Naive thymus-derived CD4-positive, alpha-beta T cell (primary cell): ENCODE measurements at regions of chr17 and their contacts with region 1.

Region 1: GRCh38 chr17:49968380-49969133 is 433 bp upstream of the DLX4 start:
- DNase-seq: peak; percentile 46 to 77 (median 71)
- ATAC-seq: peak; percentile 83
- H3K4me3 ChIP-seq: peak overlapping the region; percentile 81
- H3K4me3 Mint-ChIP-seq: peak overlapping the region; percentile 82 to 94 (median 90)
- H3K27ac ChIP-seq: no peak overlapping the region
- H3K27ac Mint-ChIP-seq: peak overlapping the region in 7 of 9 donors; percentile 47 to 91 (median 65)
- H3K4me1 ChIP-seq: peaks cover 9 to 40% of the 10 kb centered on the region in 2 donors
- H3K4me1 Mint-ChIP-seq: peaks cover 25 to 79% (median 57%) of the 10 kb centered on the region in 7 donors
- H3K27me3 ChIP-seq: peaks cover 11 to 41% of the 10 kb centered on the region in 2 donors
- H3K27me3 Mint-ChIP-seq: peaks cover 63 to 93% (median 72%) of the 10 kb centered on the region in 5 donors

Region 2: DNA sequence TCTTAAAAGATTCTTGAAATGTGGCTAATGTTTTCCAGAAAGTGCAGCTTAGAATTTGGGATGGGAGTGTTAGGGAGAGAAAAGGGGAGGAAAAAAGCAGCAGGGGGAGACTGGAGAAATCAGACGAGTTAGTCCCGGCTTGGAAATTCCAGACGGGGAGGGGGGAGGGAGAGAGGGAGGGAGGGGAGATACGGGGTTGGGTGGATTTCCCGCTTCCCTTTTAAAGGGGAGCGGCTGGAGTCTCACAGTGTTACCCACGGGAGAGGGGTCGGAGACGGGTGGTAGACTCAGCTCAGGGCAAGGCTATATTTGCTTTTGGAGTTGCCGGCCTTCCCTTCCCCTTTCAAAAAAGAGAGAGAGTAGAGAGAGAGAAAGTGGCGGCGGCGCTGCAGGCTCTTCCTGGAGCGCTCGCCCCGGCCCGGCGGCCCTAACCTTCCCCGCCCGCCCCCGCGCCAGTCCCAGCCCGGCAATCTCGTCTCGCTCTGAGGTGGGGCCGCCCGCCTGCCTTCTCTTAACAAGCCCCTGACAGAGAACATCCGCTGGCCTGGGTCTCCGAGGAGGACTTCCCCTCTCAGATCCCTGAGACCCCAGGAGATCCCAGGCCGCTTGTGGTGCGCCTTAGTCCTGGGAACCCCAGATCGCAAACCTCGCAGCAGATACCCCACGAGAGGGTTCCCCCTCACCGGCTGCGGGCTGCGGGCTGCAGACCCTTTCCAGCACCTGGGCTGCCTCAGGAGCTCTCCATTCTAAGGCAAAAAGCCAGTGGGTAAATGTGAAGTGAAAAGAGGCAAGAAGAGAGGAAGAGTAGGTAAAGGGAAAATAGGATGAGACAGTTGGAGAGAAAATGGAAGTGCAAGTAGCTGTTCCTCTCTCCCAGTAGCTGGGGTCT is 964.7 kb before region 1 on chr17:
- CTCF ChIA-PET with region 1: no interaction called
- POLR2A ChIA-PET with region 1: no interaction called
- intact Hi-C with region 1: loop called in 1 of 2 experiments (anchors 10 kb)
- DNase-seq: no peak
- ATAC-seq: no peak
- H3K4me3 ChIP-seq: no peak overlapping the region
- H3K4me3 Mint-ChIP-seq: no peak overlapping the region
- H3K27ac ChIP-seq: no peak overlapping the region
- H3K27ac Mint-ChIP-seq: no peak overlapping the region
- H3K4me1 ChIP-seq: no peaks in the 10 kb centered on the region
- H3K4me1 Mint-ChIP-seq: peaks cover under 1 to 13% (median 4%) of the 10 kb centered on the region in 7 donors
- H3K27me3 ChIP-seq: peaks cover 36 to 55% of the 10 kb centered on the region in 2 donors
- H3K27me3 Mint-ChIP-seq: peaks cover 90 to 97% (median 96%) of the 10 kb centered on the region in 5 donors

Region 3: GRCh38 chr17:49496183-49496866 is 472.2 kb before region 1 on chr17:
- CTCF ChIA-PET with region 1: no interaction called
- POLR2A ChIA-PET with region 1: no interaction called
- intact Hi-C with region 1: loop called (anchors 5 kb)
- DNase-seq: peak; percentile 66 to 93 (median 83)
- ATAC-seq: peak; percentile 89
- H3K4me3 ChIP-seq: peak overlapping the region; percentile 67
- H3K4me3 Mint-ChIP-seq: peak overlapping the region; percentile 60 to 90 (median 80)
- H3K27ac ChIP-seq: no peak overlapping the region
- H3K27ac Mint-ChIP-seq: peak overlapping the region in 1 of 9 donors; percentile 31
- H3K4me1 ChIP-seq: peaks cover 27 to 29% of the 10 kb centered on the region in 2 donors
- H3K4me1 Mint-ChIP-seq: peaks cover 0 to 23% (median 22%) of the 10 kb centered on the region in 7 donors
- H3K27me3 ChIP-seq: peaks cover 5 to 30% of the 10 kb centered on the region in 2 donors
- H3K27me3 Mint-ChIP-seq: peaks cover 29 to 83% (median 34%) of the 10 kb centered on the region in 5 donors

Region 4: GRCh38 chr17:49585422-49586027 is 383.0 kb before region 1 on chr17:
- CTCF ChIA-PET with region 1: no interaction called
- POLR2A ChIA-PET with region 1: no interaction called
- intact Hi-C with region 1: no loop called
- DNase-seq: no peak
- ATAC-seq: no peak
- H3K4me3 ChIP-seq: no peak overlapping the region
- H3K4me3 Mint-ChIP-seq: no peak overlapping the region
- H3K27ac ChIP-seq: no peak overlapping the region
- H3K27ac Mint-ChIP-seq: no peak overlapping the region
- H3K4me1 ChIP-seq: no peaks in the 10 kb centered on the region
- H3K4me1 Mint-ChIP-seq: peaks cover 0 to 5% (median 0%) of the 10 kb centered on the region in 7 donors
- H3K27me3 ChIP-seq: no peaks in the 10 kb centered on the region
- H3K27me3 Mint-ChIP-seq: no peaks in the 10 kb centered on the region

Region 5: GRCh38 chr17:50361561-50362480 is 393.3 kb after region 1 on chr17:
- CTCF ChIA-PET with region 1: no interaction called
- POLR2A ChIA-PET with region 1: no interaction called
- intact Hi-C with region 1: no loop called
- DNase-seq: peak in 8 of 9 donors; percentile 44 to 70 (median 61)
- ATAC-seq: peak; percentile 94
- H3K4me3 ChIP-seq: no peak overlapping the region
- H3K4me3 Mint-ChIP-seq: peak overlapping the region; percentile 19 to 76 (median 44)
- H3K27ac ChIP-seq: peak overlapping the region; percentile 12
- H3K27ac Mint-ChIP-seq: peak overlapping the region; percentile 6 to 93 (median 42)
- H3K4me1 ChIP-seq: peaks cover 0 to 6% of the 10 kb centered on the region in 2 donors
- H3K4me1 Mint-ChIP-seq: peaks cover 7 to 15% (median 9%) of the 10 kb centered on the region in 7 donors
- H3K27me3 ChIP-seq: no peaks in the 10 kb centered on the region
- H3K27me3 Mint-ChIP-seq: no peaks in the 10 kb centered on the region